ENCODE measurements at regions of chr4 and their contacts with region 1.

Region 1: DNA sequence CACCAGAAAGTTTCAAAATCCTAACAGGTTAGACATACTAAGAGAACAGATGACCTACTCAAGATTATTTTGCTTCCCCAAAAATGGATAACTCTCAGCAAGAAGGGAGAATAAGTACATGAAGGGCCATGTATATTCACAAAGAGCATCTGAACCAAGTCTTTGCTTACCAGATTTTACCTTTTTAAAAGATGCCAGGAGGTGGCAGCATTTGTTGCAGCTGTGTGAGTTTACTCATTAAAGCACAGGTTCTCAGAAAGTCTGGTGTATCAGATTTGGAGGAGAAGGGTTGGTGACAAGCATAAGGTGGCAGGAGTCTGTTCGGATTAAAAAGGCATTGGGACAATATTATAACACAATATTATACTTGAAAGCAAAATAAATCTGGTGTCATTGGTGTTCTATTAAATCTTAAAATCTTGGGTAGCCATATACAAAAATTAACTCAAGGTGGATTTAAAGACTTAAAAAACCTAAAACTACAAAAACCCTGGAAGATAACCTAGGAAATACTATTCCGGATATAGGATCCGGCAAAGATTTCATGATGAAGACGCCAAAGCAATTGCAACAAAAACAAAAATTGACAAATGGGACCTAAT is 51.3 kb upstream of the NFKB1 start:
- DNase-seq: no peak

Region 2: DNA sequence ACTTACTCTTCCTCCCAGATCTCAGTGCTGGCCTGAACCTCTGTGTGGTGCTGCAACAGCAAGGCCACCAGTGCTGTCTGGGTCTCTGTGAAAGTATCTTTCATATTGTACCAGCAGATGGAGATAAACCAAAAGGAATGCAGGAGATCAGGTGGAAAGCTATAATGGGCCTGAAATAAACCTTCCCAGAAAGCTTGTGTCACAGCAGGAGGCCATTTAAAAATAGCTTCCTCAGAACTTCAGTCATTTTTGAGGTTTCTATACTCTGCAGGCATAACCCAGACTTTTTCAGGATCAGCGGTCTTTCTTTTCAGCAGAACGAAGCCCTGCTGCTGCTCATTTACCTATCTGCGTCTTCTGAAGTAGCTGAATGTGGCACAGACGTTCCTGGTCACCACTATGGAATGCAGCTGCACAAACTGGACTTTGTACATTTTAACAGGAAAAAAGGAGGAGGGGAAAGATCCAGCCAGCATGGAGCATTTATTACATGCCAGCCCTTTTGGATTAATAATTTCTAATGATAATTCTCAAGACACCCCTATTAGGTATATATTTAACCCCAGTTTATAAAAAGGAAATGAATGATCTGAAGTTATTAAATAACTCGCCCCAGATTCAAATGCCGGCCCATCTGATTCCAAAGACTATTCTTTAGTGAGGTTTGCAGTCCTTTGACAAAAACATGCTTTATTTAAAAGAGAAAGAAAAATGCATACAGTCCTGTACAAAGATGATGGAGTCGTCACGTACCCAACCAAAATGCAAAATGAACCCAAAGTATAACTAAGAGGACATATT is 171.0 kb after region 1 on chr4:
- intact Hi-C with region 1: loop called (anchors 5 kb)
- DNase-seq: no peak